ENCODE measurements at regions of chr7 and their contacts with region 1.

Region 1: GRCh38 chr7:31488562-31489203 is 25.2 kb upstream of the ITPRID1 start:
- DNase-seq: peak; percentile 3
- H3K4me3 Mint-ChIP-seq: no peak overlapping the region
- H3K27ac Mint-ChIP-seq: no peak overlapping the region
- H3K4me1 Mint-ChIP-seq: no peaks in the 10 kb centered on the region
- H3K27me3 Mint-ChIP-seq: no peaks in the 10 kb centered on the region

Region 2: DNA sequence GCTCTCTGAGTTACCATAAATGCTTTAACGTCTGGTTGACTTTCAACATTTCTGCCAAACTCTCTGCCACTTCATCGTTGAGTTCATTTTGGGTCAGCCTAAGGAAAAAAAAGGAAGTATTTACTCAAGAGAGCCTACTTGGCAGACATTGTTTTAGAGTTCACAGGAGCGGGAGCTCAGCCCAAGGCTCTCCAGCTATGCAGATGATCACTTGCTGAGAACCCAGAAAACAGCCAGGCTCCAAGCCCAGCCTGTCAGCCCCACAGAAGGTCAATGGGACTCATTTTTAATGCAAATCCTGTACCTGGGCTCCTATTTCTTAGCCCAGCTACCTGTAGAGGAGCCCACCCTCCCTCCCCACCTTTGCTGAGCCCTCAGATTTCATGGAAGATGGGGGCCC is 1055.6 kb before region 1 on chr7:
- intact Hi-C with region 1: no loop called
- DNase-seq: no peak
- H3K4me3 Mint-ChIP-seq: no peak overlapping the region
- H3K27ac Mint-ChIP-seq: no peak overlapping the region
- H3K4me1 Mint-ChIP-seq: no peaks in the 10 kb centered on the region
- H3K27me3 Mint-ChIP-seq: no peaks in the 10 kb centered on the region

Region 3: GRCh38 chr7:31443457-31443856 is 45.2 kb before region 1 on chr7:
- intact Hi-C with region 1: loop called (anchors 1 kb)
- DNase-seq: no peak
- H3K4me3 Mint-ChIP-seq: no peak overlapping the region
- H3K27ac Mint-ChIP-seq: no peak overlapping the region
- H3K4me1 Mint-ChIP-seq: no peaks in the 10 kb centered on the region
- H3K27me3 Mint-ChIP-seq: no peaks in the 10 kb centered on the region

Measured in activated T-helper 1 cell treated with anti-CD3 and anti-CD28 coated beads, Interleukin-12 subunit alpha, Interleukin-12 subunit beta, Interleukin-2, Interleukin-4 antibody, amounts not matched to agents 30 ng/mL and 10 ng/mL and 1 ng/mL, durations not matched to agents 14 hours and 24 hours and 36 hours (primary cell).